Aorta (tissue), 5 donors: ENCODE measurements at regions of chr17 and their contacts with region 1.

Region 1: GRCh38 chr17:2244545-2245525 is 58.8 kb downstream of the SMG6 start:
- DNase-seq: peak; percentile 91 to 96
- ATAC-seq: peak; percentile 93
- H3K4me3 ChIP-seq: no peak overlapping the region
- H3K27ac ChIP-seq: no peak overlapping the region
- H3K4me1 ChIP-seq: peaks cover 0 to 2% of the 10 kb centered on the region in 2 donors
- H3K27me3 ChIP-seq: no peaks in the 10 kb centered on the region

Region 2: GRCh38 chr17:2054512-2055291 is 190.1 kb before region 1 on chr17 and contains the start of gene HIC1:
- intact Hi-C with region 1: loop called (anchors 2 kb)
- DNase-seq: peak; percentile 86 to 94
- ATAC-seq: peak; percentile 76
- H3K4me3 ChIP-seq: peak within 1 kb of the TSS; percentile 9 to 10
- H3K27ac ChIP-seq: no peak within 1 kb of the TSS
- H3K4me1 ChIP-seq: no peaks in the 10 kb centered on the region
- H3K27me3 ChIP-seq: no peaks in the 10 kb centered on the region
- total RNA-seq, gene HIC1: 27.2 to 69.2 TPM

Region 3: GRCh38 chr17:2094891-2095535 is 149.8 kb before region 1 on chr17:
- intact Hi-C with region 1: loop called (anchors 1 to 5 kb)
- DNase-seq: peak; percentile 80 to 84
- ATAC-seq: peak; percentile 69
- H3K4me3 ChIP-seq: no peak overlapping the region
- H3K27ac ChIP-seq: no peak overlapping the region
- H3K4me1 ChIP-seq: peaks cover 0 to 1% of the 10 kb centered on the region in 2 donors
- H3K27me3 ChIP-seq: no peaks in the 10 kb centered on the region

Region 4: GRCh38 chr17:2282297-2282873 is 37.5 kb after region 1 on chr17:
- intact Hi-C with region 1: loop called in 1 of 2 experiments (anchors 5 kb)
- DNase-seq: no peak
- ATAC-seq: peak; percentile 68
- H3K4me3 ChIP-seq: no peak overlapping the region
- H3K27ac ChIP-seq: peak overlapping the region in 1 of 2 donors; percentile 33
- H3K4me1 ChIP-seq: no peaks in the 10 kb centered on the region
- H3K27me3 ChIP-seq: no peaks in the 10 kb centered on the region